ENCODE measurements at regions of chr11 and their contacts with region 1.

Region 1: GRCh38 chr11:67401495-67402191 is at the start of gene PPP1CA:
- DNase-seq: peak; percentile 97
- ATAC-seq: peak; percentile 67
- H3K4me3 Mint-ChIP-seq: peak within 1 kb of the TSS; percentile 82
- H3K27ac Mint-ChIP-seq: peak within 1 kb of the TSS; percentile 87
- H3K4me1 Mint-ChIP-seq: peaks cover 52% of the 10 kb centered on the region
- H3K27me3 Mint-ChIP-seq: no peaks in the 10 kb centered on the region
- total RNA-seq, gene PPP1CA: 199 to 227 TPM

Region 2: DNA sequence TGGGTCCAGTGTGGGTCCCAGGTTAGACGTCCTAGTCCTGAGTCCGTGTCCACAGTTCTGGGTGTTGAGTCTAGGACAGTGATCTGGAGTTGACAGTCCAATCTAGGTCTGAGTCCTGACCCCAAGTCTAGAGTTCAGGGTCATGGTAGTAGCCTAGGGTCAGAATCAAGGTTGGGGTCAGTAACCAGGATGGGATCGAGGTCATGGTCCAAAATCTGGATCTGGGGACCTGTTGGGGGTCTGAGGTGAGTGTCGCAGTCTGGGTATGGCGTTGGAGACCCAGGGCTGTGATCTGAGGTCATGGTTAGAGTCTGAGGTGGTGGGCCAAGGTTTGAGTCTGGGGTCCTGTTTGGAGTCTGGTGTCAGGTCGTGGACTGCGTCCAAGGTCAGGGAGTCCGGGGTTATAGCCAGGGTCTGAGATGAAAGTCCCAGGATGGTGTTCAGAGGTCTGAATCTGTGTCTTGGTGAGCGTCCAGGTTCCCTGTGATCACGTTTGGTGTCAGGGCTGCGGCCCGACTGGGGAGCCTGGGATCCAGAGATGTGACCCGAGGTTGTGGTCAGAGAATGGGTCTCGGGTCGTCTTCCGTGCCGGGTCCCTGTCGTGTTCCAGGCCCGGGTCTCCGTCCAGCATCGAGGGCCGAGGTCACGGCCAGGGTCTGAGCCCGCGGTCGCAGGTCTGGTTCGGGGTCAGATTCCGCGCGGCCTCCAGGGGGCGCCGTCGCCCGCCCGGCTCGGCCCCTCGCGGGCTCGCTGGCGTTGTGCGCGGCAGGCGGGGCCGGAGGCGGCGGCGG is 135.8 kb before region 1 on chr11:
- CTCF ChIA-PET with region 1: no interaction called
- POLR2A ChIA-PET with region 1: interaction called, 3 read pairs
- intact Hi-C with region 1: loop called in 1 of 2 experiments (anchors 5 kb)
- DNase-seq: peak; percentile 87
- ATAC-seq: peak; percentile 18
- H3K4me3 Mint-ChIP-seq: peak overlapping the region; percentile 72
- H3K27ac Mint-ChIP-seq: peak overlapping the region; percentile 90
- H3K4me1 Mint-ChIP-seq: peaks cover 78% of the 10 kb centered on the region
- H3K27me3 Mint-ChIP-seq: no peaks in the 10 kb centered on the region

Region 3: DNA sequence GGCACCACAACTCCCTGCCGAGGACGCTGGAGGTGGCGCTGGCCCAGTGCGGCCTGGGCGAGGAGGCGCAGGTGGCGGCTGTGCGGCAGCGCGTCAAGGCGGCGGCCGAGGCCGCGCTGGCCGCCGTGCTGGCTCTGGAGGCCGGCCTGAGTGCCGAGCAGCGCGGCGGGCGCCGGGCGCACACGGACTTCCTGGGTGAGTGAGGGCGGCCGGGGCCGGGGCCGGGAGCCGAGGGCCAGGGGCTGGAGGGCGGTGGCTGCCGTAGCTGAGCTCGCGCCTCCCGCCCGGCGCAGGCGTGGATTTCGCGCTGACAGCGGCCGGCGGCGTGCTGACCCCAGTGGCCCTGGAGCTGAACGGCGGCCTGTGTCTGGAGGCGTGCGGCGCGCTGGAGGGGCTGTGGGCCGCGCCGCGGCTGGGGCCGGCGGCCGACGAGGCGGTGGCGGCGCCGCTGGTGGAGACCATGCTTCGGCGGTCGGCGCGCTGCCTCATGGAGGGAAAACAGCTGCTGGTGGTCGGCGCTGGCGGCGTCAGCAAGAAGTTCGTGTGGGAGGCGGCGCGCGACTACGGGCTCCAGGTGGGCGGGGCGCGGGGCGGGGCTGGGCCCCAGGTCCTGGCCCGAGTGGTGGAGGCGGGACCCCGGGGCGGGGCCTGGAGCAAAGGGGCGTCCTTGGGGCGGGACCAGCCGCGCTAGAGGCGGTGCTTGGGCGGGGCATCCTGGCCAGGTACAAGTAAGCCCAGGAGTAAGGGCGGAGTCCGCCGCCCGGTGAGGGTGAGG is 19.2 kb after region 1 on chr11:
- CTCF ChIA-PET with region 1: interaction called, 34 read pairs
- POLR2A ChIA-PET with region 1: interaction called, 14 read pairs
- intact Hi-C with region 1: loop called (anchors 1 kb)
- DNase-seq: peak; percentile 99
- ATAC-seq: peak; percentile 92
- H3K4me3 Mint-ChIP-seq: peak overlapping the region; percentile 76
- H3K27ac Mint-ChIP-seq: peak overlapping the region; percentile 84
- H3K4me1 Mint-ChIP-seq: peaks cover 49% of the 10 kb centered on the region
- H3K27me3 Mint-ChIP-seq: no peaks in the 10 kb centered on the region

Region 4: GRCh38 chr11:67439321-67439883 is 37.8 kb after region 1 on chr11:
- CTCF ChIA-PET with region 1: interaction called, 16 read pairs
- POLR2A ChIA-PET with region 1: interaction called, 9 read pairs
- intact Hi-C with region 1: loop called (anchors 1 to 2 kb)
- DNase-seq: peak; percentile 77
- ATAC-seq: peak; percentile 2
- H3K4me3 Mint-ChIP-seq: peak overlapping the region; percentile 84
- H3K27ac Mint-ChIP-seq: peak overlapping the region; percentile 97
- H3K4me1 Mint-ChIP-seq: peaks cover 49% of the 10 kb centered on the region
- H3K27me3 Mint-ChIP-seq: no peaks in the 10 kb centered on the region

Region 5: GRCh38 chr11:67482825-67483798 is 81.5 kb after region 1 on chr11 and contains the start of gene AIP:
- CTCF ChIA-PET with region 1: interaction called, 11 read pairs
- POLR2A ChIA-PET with region 1: interaction called, 4 read pairs
- intact Hi-C with region 1: loop called (anchors 1 to 5 kb)
- DNase-seq: peak; percentile 99
- ATAC-seq: peak; percentile 72
- H3K4me3 Mint-ChIP-seq: peak within 1 kb of the TSS; percentile 86
- H3K27ac Mint-ChIP-seq: peak within 1 kb of the TSS; percentile 99
- H3K4me1 Mint-ChIP-seq: peaks cover 50% of the 10 kb centered on the region
- H3K27me3 Mint-ChIP-seq: no peaks in the 10 kb centered on the region
- total RNA-seq, gene AIP: 142 to 144 TPM

Region 6: DNA sequence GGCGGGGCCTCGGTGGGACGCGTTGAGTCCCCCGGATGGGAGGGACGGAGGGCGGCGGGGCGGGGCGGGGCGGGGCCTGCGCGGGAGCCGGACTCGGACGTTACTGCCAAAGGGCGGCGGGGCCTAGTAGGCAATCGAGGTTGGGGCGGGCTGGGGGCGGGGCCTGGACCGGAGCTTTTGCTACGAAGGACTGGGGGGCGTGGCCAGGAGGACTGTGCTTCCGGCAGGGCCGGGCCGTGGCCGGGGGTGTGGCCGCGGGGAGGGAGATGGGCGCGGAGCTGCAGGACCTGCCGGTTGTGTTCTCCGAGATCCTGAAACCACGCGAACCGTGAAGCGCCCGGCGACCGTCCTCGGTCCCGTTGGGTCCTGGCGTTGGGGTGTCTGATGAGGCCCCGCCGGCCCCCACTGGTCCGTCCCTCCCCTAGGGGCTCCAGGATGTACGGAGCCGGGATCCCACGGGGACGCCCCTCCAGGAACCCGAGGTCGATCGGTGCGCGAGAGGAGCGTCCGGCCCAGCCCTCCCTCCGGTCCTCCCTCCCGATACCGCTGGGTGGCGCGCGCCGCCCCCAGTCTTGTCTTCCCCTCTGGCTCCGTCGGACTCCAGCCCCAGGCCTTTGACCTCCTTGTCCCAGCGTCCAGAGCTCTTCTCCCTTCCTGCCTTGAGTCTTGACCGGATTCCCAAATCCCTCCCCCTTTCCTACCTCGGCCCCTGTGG is 228.7 kb after region 1 on chr11:
- CTCF ChIA-PET with region 1: interaction called, 3 read pairs
- POLR2A ChIA-PET with region 1: no interaction called
- intact Hi-C with region 1: loop called in 1 of 2 experiments (anchors 1 kb)
- DNase-seq: peak; percentile 99
- ATAC-seq: peak; percentile 79
- H3K4me3 Mint-ChIP-seq: peak overlapping the region; percentile 79
- H3K27ac Mint-ChIP-seq: peak overlapping the region; percentile 73
- H3K4me1 Mint-ChIP-seq: peaks cover 7% of the 10 kb centered on the region
- H3K27me3 Mint-ChIP-seq: no peaks in the 10 kb centered on the region